ENCODE measurements at regions of chr1 and their contacts with region 1.

Region 1: DNA sequence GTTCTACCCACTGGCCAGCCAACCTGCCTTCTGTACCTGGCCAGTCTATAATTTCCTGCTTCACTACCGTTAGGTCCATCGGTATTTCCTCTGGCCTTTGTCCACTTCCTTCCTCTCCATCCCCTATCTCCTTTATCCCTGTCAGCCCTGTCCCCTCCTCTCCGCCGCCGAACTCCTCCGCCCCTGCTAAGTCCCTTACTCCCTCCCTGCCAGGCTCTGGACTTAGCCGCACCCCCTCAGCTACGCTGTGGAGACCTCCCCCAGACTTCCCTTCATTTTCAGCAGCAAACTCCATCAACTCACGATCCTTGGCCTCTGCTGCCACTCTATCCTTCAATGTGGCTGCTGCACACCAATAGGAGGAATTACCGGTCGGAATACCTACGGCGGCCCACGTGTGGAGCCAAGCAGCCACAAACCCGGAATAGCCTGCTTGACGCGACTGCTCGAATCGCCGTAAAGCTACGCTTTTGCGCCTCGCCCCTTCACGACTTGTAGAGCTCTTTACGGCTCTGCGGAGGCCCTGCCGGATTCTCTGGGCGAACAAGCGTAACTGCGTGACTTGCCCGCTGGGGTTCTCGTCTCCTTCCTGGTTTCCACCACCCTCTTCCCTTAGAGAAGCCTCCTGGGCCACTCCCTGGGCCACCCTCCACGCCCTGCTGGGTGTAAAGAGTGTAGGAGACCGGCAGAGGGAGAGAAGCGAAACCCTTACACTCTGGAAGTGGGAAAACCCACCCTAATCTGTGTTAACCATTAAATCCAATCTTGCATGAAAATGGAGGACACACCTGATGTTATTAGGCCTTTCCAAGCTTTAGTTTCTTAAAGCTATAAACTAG is at the start of gene ZNHIT6:
- DNase-seq: peak; percentile 95
- H3K4me3 Mint-ChIP-seq: no peak within 1 kb of the TSS
- H3K27ac Mint-ChIP-seq: no peak within 1 kb of the TSS
- H3K4me1 Mint-ChIP-seq: peaks cover 16% of the 10 kb centered on the region
- H3K27me3 Mint-ChIP-seq: no peaks in the 10 kb centered on the region
- total RNA-seq, gene ZNHIT6: 24.7 and 26.0 TPM in 2 replicates

Region 2: DNA sequence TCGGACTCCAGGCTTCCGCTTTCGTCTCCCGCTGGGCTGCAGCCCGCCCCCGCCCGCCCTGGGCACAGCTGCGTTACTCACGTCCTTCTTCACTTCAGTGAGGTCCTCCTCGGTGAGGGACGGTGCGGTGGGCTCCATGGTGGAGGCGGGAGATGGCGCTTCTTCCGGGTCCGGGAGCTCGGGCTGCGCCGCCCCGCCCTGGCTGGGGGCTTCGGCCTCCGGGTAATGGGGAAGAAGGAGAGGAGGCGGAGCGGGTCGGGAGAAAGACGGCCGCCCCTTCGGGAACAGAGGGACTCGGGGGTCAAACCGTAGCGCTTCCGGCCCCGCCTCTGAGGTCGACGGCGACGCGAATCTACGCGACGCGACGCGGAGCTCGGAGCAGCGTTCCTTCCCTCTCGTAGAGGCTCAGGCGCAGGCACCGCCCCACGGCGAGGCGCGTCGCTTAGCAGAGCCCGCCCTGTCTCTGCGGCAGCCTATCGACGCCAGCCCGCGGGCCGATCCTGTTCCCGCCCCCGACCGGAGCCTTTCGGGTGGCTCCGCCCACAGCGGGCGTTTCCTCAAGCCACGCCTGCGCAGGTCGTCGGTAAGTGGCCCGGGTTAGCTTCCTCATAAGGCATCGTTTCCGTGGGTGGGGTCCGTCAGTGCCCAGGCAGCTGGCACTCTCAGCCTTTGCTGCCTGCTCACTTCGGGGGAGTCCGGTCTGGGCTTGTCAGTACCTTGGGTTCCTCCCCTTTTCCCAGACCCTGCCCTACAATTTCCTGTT is 431.8 kb before region 1 on chr1 and contains the start of gene BCL10:
- intact Hi-C with region 1: loop called (anchors 5 kb)
- DNase-seq: peak; percentile 100
- H3K4me3 Mint-ChIP-seq: peak within 1 kb of the TSS; percentile 84
- H3K27ac Mint-ChIP-seq: peak within 1 kb of the TSS; percentile 91
- H3K4me1 Mint-ChIP-seq: peaks cover 46% of the 10 kb centered on the region
- H3K27me3 Mint-ChIP-seq: peaks cover 20% of the 10 kb centered on the region
- total RNA-seq, gene BCL10: 25.5 and 27.8 TPM in 2 replicates

Region 3: DNA sequence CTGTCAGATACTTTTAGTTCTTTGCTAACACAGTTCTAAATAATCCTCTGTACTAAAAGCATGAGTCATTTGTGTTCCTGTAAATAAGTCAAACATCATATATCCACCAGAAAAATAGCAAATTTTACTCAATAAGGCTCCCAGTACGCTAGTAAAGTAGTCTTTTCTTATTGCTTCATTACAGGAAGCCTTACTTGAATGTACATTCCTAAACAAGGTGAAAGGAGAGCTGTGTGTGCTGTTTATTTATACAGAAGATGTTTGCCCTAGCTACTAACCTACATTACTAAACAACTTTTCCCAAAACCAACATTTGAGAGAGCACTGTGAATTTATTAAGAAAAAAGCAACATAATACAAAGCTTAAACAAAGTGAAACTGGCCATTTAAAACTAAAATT is 52.0 kb before region 1 on chr1:
- intact Hi-C with region 1: loop called (anchors 5 kb)
- DNase-seq: no peak
- H3K4me3 Mint-ChIP-seq: no peak overlapping the region
- H3K27ac Mint-ChIP-seq: no peak overlapping the region
- H3K4me1 Mint-ChIP-seq: peaks cover 4% of the 10 kb centered on the region
- H3K27me3 Mint-ChIP-seq: no peaks in the 10 kb centered on the region

Region 4: DNA sequence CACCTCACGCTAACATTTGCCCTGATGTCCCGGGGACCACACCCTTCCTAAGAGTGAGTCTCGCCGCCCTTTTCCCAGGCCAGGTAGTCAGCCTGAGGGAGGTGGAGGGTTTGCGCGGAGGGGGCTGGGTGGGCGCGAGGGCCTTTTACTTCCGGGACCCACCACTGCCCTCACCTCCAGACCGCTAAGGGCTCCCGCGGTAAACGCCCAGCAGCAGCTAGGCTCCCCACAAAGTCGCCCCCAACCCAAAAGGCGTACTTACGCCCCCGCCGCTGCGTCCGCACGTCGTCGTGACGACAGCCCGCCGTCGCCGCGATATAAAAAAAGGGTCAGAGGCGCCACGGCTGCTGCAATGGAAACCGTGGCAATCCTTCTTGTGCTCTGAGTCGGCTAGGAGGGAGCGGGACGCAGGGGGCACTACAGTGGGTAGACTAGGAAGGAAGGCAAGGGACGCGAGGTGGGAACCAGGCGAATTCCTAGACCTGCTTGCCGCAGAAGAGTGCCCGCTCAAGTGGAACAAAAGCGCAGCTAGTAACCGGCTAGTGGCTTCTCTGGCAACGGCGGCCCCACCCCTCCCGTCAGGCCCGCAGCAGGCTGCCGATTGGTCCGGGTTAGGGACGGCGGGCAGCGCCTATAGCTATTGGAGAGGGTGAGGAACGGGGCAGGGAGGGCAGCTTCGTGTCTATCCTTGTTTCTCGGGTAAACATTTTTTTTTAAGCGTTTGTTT is 687.7 kb after region 1 on chr1 and contains the start of gene ODF2L:
- intact Hi-C with region 1: loop called (anchors 5 kb)
- DNase-seq: peak; percentile 97
- H3K4me3 Mint-ChIP-seq: peak within 1 kb of the TSS; percentile 94
- H3K27ac Mint-ChIP-seq: peak within 1 kb of the TSS; percentile 98
- H3K4me1 Mint-ChIP-seq: peaks cover 37% of the 10 kb centered on the region
- H3K27me3 Mint-ChIP-seq: peaks cover 13% of the 10 kb centered on the region
- total RNA-seq, gene ODF2L: 16.0 and 23.3 TPM in 2 replicates

Region 5: GRCh38 chr1:86419277-86419903 is 711.2 kb after region 1 on chr1:
- intact Hi-C with region 1: no loop called
- DNase-seq: peak; percentile 85
- H3K4me3 Mint-ChIP-seq: peak overlapping the region; percentile 44
- H3K27ac Mint-ChIP-seq: no peak overlapping the region
- H3K4me1 Mint-ChIP-seq: peaks cover 2% of the 10 kb centered on the region
- H3K27me3 Mint-ChIP-seq: peaks cover 14% of the 10 kb centered on the region

Measured in activated CD4-positive, alpha-beta T cell treated with anti-CD3 and anti-CD28 coated beads, Interleukin-2, amount 10 ng/mL, durations not matched to agents 24 days and 14 days (primary cell).